GM18951 (cell line): ENCODE measurements at regions of chr20 and their contacts with region 1.

Region 1: GRCh38 chr20:49610701-49611538 is 43.0 kb upstream of the PTGIS start:
- POLR2A ChIP-seq: no peak

Region 2: DNA sequence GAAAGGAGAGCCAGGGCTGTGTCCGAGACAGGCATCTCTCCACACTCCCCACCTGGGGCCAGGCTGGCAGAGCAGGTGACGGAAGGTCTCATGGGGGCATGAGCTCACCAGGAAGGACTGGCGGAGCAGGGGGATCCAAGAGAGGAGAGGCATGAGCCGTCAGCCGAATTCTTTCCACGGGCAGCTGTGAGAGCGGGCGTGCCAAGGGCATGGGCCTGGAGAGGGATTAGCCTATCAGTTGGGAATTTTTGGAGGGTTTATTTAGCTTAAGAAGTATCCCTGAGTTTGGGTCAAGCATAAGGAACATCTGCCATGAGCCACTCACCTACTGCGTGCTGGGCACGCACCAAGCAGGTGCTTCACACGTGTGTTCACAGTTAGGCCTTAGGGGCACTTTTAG is 272.9 kb before region 1 on chr20:
- in situ Hi-C with region 1: loop called (anchors 10 kb)
- POLR2A ChIP-seq: no peak

Region 3: DNA sequence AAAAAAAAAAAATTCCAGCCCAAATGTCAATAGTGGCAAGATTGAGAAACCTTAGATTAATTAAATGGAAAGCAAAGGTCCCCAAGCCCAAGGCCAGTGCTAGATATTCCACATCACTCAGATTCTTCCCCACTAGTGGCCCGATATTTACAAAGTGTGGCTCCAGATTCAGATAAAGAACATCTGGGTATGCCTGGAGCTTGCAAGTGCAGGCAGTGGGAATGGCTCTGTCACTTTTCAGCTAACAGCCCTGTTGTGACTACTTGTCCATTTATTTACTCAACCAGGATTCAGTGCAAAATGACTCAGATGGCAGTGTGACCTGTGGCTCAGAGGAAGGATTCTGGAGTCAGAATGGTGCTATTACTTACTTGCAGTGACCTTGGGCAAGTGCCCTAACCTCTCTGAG is 120.2 kb before region 1 on chr20:
- in situ Hi-C with region 1: no loop called
- POLR2A ChIP-seq: no peak

Region 4: DNA sequence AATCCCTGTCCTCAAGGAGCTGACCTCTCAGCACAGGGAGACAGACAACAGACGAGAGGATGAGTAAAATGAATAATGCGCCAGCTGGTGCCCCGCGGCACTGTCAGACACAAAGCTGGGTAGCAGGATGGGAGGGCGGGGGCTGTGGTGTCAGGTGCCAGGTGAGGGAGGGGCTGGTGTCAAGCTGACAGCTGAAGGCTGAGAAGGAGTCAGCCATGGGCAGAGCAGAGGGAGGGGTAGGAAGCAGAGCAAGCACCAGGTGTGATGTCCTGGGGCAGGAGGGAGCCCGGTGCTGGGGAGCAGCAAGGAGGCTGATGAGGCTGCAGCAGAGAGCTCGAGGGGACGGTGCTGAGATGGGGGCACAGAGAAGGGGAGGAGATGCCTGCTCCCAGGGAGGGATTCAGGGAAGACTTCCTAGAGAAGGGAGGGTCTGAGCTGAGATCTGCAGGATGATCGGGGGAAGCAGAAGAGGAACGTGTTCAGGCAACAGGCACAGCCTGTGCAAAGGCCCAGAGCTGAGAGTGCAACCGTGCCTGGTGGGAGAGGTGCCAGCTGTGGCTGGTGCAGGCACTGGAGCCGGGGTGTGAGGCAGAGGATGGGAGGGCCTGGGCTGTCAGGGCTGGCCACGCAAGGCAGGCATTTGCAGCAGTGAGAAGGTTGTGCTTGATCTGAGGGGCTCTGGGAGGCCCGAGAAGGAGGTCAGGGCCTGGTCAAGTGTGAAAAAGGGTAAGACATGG is 70.9 kb before region 1 on chr20:
- in situ Hi-C with region 1: loop called (anchors 5 kb)
- POLR2A ChIP-seq: no peak

Region 5: GRCh38 chr20:49846206-49846807 is 235.4 kb after region 1 on chr20:
- in situ Hi-C with region 1: loop called (anchors 25 kb)
- POLR2A ChIP-seq: no peak